CD8-positive, alpha-beta T cell (primary cell): ENCODE measurements at regions of chr16 and their contacts with region 1.

Region 1: DNA sequence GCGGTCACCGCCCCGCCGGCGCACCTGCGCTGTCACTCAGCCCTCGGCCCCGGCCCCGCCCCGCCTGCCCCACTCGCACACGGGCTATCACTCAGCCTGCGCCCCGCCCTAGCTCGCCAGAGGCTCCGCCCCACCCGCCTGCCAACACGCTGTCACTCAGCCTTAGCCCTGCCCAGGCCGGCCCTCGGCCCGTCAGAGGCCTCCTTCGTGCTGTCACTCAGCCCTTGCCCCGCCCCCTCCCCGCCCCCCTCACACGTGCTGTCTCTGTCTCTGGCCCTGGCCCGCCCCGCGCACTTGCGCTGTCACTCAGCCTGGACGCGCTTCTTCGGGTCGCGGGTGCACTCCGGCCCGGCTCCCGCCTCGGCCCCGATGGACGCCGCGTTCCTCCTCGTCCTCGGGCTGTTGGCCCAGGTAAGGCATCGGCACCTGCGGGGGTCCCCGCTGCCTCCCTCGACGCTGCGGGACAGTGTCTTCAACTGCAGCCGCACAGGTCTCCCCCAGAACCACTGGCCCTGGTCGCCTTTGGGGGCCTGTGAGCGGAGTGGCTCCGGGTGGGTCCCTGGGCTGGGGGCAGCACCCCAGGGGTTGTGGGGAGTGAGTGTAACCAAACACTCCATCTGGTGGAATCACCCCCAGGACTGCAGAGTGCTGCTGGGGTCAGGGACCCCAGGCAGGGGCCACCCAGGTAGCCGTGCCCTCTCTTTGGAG is at the start of gene CDH15:
- DNase-seq: peak; percentile 83 to 98 (median 91)
- ATAC-seq: peak; percentile 96
- H3K4me3 ChIP-seq: peak within 1 kb of the TSS; percentile 35 to 50
- H3K4me3 Mint-ChIP-seq: peak within 1 kb of the TSS; percentile 69
- H3K27ac ChIP-seq: no peak within 1 kb of the TSS
- H3K27ac Mint-ChIP-seq: no peak within 1 kb of the TSS
- H3K4me1 ChIP-seq: peaks cover 29% of the 10 kb centered on the region
- H3K4me1 Mint-ChIP-seq: peaks cover 6% of the 10 kb centered on the region
- H3K27me3 ChIP-seq: peaks cover 0 to 2% of the 10 kb centered on the region in 2 experiments
- H3K27me3 Mint-ChIP-seq: no peaks in the 10 kb centered on the region
- CTCF ChIP-seq: no peak
- total RNA-seq, gene CDH15: 0.24 TPM in 1 of 2 experiments, not detected in the other

Region 2: GRCh38 chr16:88415713-88416323 is 755.8 kb before region 1 on chr16:
- CTCF ChIA-PET with region 1: no interaction called
- POLR2A ChIA-PET with region 1: no interaction called
- intact Hi-C with region 1: no loop called
- DNase-seq: no peak
- ATAC-seq: no peak
- H3K4me3 ChIP-seq: no peak overlapping the region
- H3K4me3 Mint-ChIP-seq: no peak overlapping the region
- H3K27ac ChIP-seq: no peak overlapping the region
- H3K27ac Mint-ChIP-seq: no peak overlapping the region
- H3K4me1 ChIP-seq: no peaks in the 10 kb centered on the region
- H3K4me1 Mint-ChIP-seq: no peaks in the 10 kb centered on the region
- H3K27me3 ChIP-seq: no peaks in the 10 kb centered on the region
- H3K27me3 Mint-ChIP-seq: no peaks in the 10 kb centered on the region
- CTCF ChIP-seq: no peak

Region 3: DNA sequence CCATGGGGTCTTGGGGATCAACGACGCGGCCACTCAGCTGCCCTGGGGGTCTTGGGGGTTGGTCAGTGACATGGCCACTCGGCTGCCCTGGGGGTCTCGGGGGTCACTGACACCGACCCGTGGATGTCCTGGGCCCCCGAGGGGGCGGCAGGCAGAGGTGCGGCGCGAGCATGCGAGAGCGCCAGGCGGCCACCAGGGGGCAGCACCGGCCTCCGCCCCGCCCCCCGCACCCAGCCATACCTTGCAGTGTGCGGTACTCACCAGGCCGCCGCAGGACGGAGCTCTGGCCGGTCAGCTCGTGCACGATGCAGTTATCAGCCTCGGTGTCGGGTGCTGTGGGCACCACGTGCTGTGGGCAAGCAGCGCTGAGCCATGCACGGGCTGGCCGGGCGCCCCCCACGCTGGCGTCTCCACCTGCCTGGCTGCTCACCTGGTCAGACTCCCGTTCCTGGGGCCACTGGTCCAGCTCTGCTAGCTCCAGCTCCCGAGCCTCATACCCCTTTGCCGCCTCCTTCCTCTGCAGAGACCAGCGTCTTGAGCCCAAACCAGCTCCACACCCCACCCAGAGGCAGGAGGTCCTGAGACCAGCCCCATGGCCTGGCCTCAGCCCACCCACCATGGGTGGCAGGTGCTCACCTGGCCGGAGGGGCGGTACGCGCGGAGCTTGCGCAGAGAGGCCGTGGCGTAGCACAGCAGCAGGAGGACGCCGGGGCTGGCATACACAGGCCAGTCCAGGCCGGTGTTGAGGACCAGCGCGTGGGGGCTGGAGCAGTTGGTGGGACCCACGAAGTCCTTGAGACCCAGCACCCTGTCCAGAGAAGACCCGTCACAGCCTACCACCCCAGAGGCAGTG is 434.1 kb before region 1 on chr16:
- CTCF ChIA-PET with region 1: interaction called, 8 read pairs
- POLR2A ChIA-PET with region 1: no interaction called
- intact Hi-C with region 1: loop called in 1 of 2 experiments (anchors 1 kb)
- DNase-seq: peak; percentile 34 to 88 (median 59)
- ATAC-seq: peak; percentile 97
- H3K4me3 ChIP-seq: no peak overlapping the region
- H3K4me3 Mint-ChIP-seq: no peak overlapping the region
- H3K27ac ChIP-seq: no peak overlapping the region
- H3K27ac Mint-ChIP-seq: no peak overlapping the region
- H3K4me1 ChIP-seq: peaks cover 6% of the 10 kb centered on the region
- H3K4me1 Mint-ChIP-seq: peaks cover 2% of the 10 kb centered on the region
- H3K27me3 ChIP-seq: no peaks in the 10 kb centered on the region
- H3K27me3 Mint-ChIP-seq: no peaks in the 10 kb centered on the region
- CTCF ChIP-seq: peak; percentile 95

Region 4: GRCh38 chr16:88811769-88812512 is 359.7 kb before region 1 on chr16 and contains the start of gene APRT:
- CTCF ChIA-PET with region 1: interaction called, 3 read pairs
- POLR2A ChIA-PET with region 1: no interaction called
- intact Hi-C with region 1: loop called in 1 of 2 experiments (anchors 1 kb)
- DNase-seq: peak; percentile 93 to 99 (median 97)
- ATAC-seq: peak; percentile 90
- H3K4me3 ChIP-seq: peak within 1 kb of the TSS; percentile 75 to 99
- H3K4me3 Mint-ChIP-seq: peak within 1 kb of the TSS; percentile 97
- H3K27ac ChIP-seq: peak within 1 kb of the TSS; percentile 71 to 87
- H3K27ac Mint-ChIP-seq: peak within 1 kb of the TSS; percentile 97
- H3K4me1 ChIP-seq: peaks cover 21% of the 10 kb centered on the region
- H3K4me1 Mint-ChIP-seq: peaks cover 19% of the 10 kb centered on the region
- H3K27me3 ChIP-seq: no peaks in the 10 kb centered on the region
- H3K27me3 Mint-ChIP-seq: no peaks in the 10 kb centered on the region
- CTCF ChIP-seq: no peak
- total RNA-seq, gene APRT: 171 to 178 TPM

Region 5: DNA sequence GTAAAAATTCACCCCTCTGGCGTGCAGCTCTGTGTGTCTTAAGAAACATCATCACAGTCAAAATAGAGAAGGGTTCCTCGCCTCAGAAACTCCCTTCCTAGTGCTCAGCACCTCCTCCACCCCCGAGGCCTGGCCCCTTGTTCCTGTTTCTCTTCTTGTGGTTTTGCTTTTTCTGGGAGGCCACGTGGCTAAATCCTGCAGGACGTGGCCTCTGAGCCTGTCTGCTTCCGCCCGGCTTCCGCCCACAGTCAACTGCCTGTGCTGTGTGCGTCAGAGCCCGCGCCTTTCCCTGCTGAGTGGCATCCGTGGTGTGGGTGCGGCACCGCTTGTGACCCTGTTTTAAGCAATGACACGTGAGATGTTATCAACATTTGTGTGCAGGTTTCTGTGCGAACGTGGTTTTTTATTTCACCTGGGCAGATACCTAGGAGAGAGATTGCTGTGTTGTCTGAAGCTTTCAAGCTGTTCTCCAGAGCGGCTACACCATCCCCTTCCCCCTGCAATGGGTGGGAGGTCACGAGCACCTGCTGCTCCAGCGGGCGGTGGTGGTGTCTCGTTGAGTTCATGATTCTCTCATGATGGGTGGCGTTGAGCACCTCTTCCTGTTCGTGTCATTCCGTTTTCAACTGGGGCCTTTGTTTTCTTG is 56.3 kb before region 1 on chr16:
- CTCF ChIA-PET with region 1: interaction called, 4 read pairs
- POLR2A ChIA-PET with region 1: interaction called, 3 read pairs
- intact Hi-C with region 1: loop called in 1 of 2 experiments (anchors 1 kb)
- DNase-seq: peak; percentile 80 to 99 (median 91)
- ATAC-seq: peak; percentile 82
- H3K4me3 ChIP-seq: peak overlapping the region; percentile 37 to 40
- H3K4me3 Mint-ChIP-seq: peak overlapping the region; percentile 81
- H3K27ac ChIP-seq: peak overlapping the region; percentile 69 to 84
- H3K27ac Mint-ChIP-seq: peak overlapping the region; percentile 99
- H3K4me1 ChIP-seq: peaks cover 49% of the 10 kb centered on the region
- H3K4me1 Mint-ChIP-seq: peaks cover 38% of the 10 kb centered on the region
- H3K27me3 ChIP-seq: no peaks in the 10 kb centered on the region
- H3K27me3 Mint-ChIP-seq: no peaks in the 10 kb centered on the region
- CTCF ChIP-seq: no peak

Region 6: GRCh38 chr16:89193021-89193575 is 21.5 kb after region 1 on chr16:
- CTCF ChIA-PET with region 1: interaction called, 4 read pairs
- POLR2A ChIA-PET with region 1: no interaction called
- intact Hi-C with region 1: loop called in 1 of 2 experiments (anchors 1 kb)
- DNase-seq: peak in 3 of 9 experiments; percentile 62 to 76 (median 64)
- ATAC-seq: no peak
- H3K4me3 ChIP-seq: no peak overlapping the region
- H3K4me3 Mint-ChIP-seq: no peak overlapping the region
- H3K27ac ChIP-seq: no peak overlapping the region
- H3K27ac Mint-ChIP-seq: no peak overlapping the region
- H3K4me1 ChIP-seq: no peaks in the 10 kb centered on the region
- H3K4me1 Mint-ChIP-seq: peaks cover 4% of the 10 kb centered on the region
- H3K27me3 ChIP-seq: no peaks in the 10 kb centered on the region
- H3K27me3 Mint-ChIP-seq: no peaks in the 10 kb centered on the region
- CTCF ChIP-seq: no peak

Region 7: DNA sequence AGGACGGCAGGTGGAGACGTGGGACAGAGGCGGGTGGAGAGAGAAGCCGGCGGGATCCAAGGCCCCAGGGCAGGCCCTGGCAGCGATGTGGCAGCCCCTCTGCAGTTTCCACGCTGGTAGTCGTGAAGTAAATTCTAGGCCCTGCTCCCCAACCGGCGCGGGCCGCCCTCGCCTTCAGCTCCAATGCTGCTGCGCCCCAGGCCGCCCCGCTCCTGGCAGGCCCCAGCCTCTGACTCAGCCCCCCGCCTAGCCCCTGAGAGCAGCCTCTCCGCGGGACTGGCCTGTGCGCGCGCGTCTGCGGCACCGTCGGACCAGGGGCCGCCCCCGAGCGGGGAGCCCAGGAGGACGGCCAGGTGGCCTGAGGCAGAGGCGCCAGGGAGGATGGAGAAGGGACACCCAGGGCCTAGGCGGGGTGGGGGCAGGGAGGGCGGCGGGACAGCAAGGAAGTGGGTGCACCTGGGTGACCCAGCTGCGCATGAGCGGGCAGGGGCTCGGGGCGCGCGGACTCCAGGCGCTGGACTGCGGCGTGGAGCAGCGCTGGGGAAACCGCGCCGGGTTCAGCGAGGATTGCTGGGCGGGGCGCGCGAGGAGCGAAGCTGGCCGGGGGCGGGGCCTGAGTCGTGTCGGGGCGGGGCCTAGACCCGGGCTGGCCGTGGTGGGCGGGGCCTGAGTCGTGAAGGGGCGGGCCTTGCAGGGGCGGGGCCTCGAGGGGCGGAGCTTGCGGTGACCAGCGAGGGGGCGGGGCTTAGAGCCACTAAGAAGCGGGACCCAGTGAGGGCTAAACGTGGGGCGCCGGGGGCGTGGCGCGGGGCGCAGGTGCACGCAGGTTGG is 75.5 kb after region 1 on chr16:
- CTCF ChIA-PET with region 1: no interaction called
- POLR2A ChIA-PET with region 1: no interaction called
- intact Hi-C with region 1: loop called (anchors 1 to 2 kb)
- DNase-seq: peak; percentile 91 to 99 (median 97)
- ATAC-seq: peak; percentile 96
- H3K4me3 ChIP-seq: peak overlapping the region; percentile 29 to 37
- H3K4me3 Mint-ChIP-seq: peak overlapping the region; percentile 75
- H3K27ac ChIP-seq: no peak overlapping the region
- H3K27ac Mint-ChIP-seq: peak overlapping the region; percentile 62
- H3K4me1 ChIP-seq: peaks cover 17% of the 10 kb centered on the region
- H3K4me1 Mint-ChIP-seq: peaks cover 19% of the 10 kb centered on the region
- H3K27me3 ChIP-seq: no peaks in the 10 kb centered on the region
- H3K27me3 Mint-ChIP-seq: no peaks in the 10 kb centered on the region
- CTCF ChIP-seq: no peak